Astrocyte of the cerebellum (primary cell): ENCODE measurements at regions of chr1 and their contacts with region 1.

Region 1: GRCh38 chr1:10714337-10715114 is 81.9 kb downstream of the CASZ1 start:
- DNase-seq: peak; percentile 9
- H3K4me3 ChIP-seq: no peak overlapping the region
- CTCF ChIP-seq: no peak

Region 2: GRCh38 chr1:10651389-10651766 is 63.1 kb before region 1 on chr1:
- in situ Hi-C with region 1: loop called (anchors 5 kb)
- DNase-seq: no peak
- H3K4me3 ChIP-seq: no peak overlapping the region
- CTCF ChIP-seq: no peak

Region 3: GRCh38 chr1:10779841-10780622 is 65.5 kb after region 1 on chr1:
- in situ Hi-C with region 1: loop called (anchors 5 kb)
- DNase-seq: no peak
- H3K4me3 ChIP-seq: no peak overlapping the region
- CTCF ChIP-seq: no peak